Mammary epithelial cell (primary cell): ENCODE measurements at regions of chr7 and their contacts with region 1.

Region 1: GRCh38 chr7:157662981-157663716 is 326.3 kb downstream of the DNAJB6 start:
- DNase-seq: no peak
- H3K4me3 ChIP-seq: no peak overlapping the region
- H3K27ac ChIP-seq: no peak overlapping the region
- H3K4me1 ChIP-seq: no peaks in the 10 kb centered on the region
- H3K27me3 ChIP-seq: no peaks in the 10 kb centered on the region
- CTCF ChIP-seq: no peak

Region 2: GRCh38 chr7:157625973-157626742 is 37.0 kb before region 1 on chr7:
- CTCF ChIA-PET with region 1: no interaction called
- dilution Hi-C with region 1: no loop called
- in situ Hi-C with region 1: no loop called
- intact Hi-C with region 1: no loop called
- DNase-seq: no peak
- H3K4me3 ChIP-seq: no peak overlapping the region
- H3K27ac ChIP-seq: no peak overlapping the region
- H3K4me1 ChIP-seq: no peaks in the 10 kb centered on the region
- H3K27me3 ChIP-seq: no peaks in the 10 kb centered on the region
- CTCF ChIP-seq: no peak

Region 3: DNA sequence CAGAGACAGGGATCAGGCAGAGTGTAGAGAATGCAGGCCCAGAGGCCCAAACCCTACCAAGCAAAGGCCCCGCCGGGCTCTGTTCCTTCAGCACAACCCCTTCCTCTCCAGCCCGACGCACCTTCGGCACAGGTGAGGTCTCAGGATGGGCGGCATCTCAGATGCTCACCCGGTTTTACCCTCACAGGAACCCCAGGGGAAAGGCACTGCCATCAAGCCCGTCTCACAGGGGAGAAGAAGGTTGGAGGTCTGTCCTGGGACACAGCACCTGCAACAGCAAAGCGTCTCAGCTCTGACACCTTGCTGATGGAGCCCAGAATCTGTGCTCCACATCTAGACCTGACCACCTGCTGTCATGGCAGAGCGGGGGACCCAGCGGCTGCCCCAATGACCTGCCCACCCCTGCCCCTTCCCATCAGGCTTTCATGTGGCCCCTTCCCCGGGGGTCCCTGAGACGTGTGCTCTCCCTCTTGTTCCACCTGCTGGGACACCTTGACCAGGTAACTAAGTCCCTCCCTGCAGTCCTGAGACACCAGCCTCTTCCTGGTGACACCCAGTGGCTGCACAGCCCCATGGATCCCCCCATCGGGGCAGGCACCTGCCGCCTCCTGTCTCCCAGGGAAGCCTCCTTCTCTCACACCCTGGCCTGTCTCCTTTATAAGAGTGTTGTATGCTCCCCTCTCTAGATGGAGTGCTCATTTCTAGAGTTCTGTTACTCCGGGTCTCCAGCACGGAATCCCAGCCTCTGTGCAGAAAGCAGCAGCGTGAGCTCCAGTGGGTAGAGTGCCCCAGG is 10.8 kb before region 1 on chr7:
- CTCF ChIA-PET with region 1: no interaction called
- dilution Hi-C with region 1: no loop called
- in situ Hi-C with region 1: no loop called
- intact Hi-C with region 1: no loop called
- DNase-seq: no peak
- H3K4me3 ChIP-seq: no peak overlapping the region
- H3K27ac ChIP-seq: no peak overlapping the region
- H3K4me1 ChIP-seq: no peaks in the 10 kb centered on the region
- H3K27me3 ChIP-seq: no peaks in the 10 kb centered on the region
- CTCF ChIP-seq: no peak

Region 4: DNA sequence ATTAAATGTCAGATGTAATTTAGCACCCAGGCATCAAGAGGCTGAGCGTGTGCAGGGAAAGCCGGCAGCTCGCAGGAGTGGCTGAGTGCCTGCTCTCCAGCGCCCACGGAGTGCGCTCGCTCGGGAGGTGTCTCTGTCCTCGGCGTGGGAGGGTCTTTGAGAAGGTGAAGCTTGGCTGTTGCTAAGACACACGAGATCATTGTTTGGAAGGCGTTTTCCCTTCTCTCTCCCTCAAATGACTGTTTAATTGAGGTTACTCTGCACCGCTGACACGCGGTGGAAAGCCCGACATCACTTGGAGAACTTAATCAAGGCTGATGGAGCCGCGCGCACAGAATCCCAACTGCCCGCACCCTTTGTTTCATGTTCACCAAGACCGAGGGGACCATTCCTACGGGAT is 88.3 kb after region 1 on chr7:
- CTCF ChIA-PET with region 1: no interaction called
- dilution Hi-C with region 1: loop called (anchors 5 kb)
- in situ Hi-C with region 1: no loop called
- intact Hi-C with region 1: no loop called
- DNase-seq: no peak
- H3K4me3 ChIP-seq: no peak overlapping the region
- H3K27ac ChIP-seq: no peak overlapping the region
- H3K4me1 ChIP-seq: no peaks in the 10 kb centered on the region
- H3K27me3 ChIP-seq: no peaks in the 10 kb centered on the region
- CTCF ChIP-seq: no peak